SK-N-SH (cell line): ENCODE measurements at regions of chr12 and their contacts with region 1.

Region 1: GRCh38 chr12:15846887-15847286 is 35.3 kb upstream of the STRAP start:
- DNase-seq: no peak
- H3K4me3 ChIP-seq: no peak overlapping the region
- H3K27ac ChIP-seq: peak overlapping the region in 1 of 2 experiments; percentile 46; a peak in 1 of 4 replicates
- H3K4me1 ChIP-seq: peaks cover 0 to 8% of the 10 kb centered on the region in 2 experiments; a peak in 1 of 4 replicates
- H3K27me3 ChIP-seq: no peaks in the 10 kb centered on the region
- CTCF ChIP-seq: no peak
- EP300 ChIP-seq: no peak
- RAD21 ChIP-seq: no peak

Region 2: GRCh38 chr12:15590180-15590826 is 256.6 kb before region 1 on chr12:
- CTCF ChIA-PET with region 1: interaction called, 21 read pairs
- POLR2A ChIA-PET with region 1: no interaction called
- DNase-seq: peak; percentile 67
- H3K4me3 ChIP-seq: peak overlapping the region in 1 of 2 experiments; percentile 25; a peak in 1 of 4 replicates
- H3K27ac ChIP-seq: peak overlapping the region in 1 of 2 experiments; percentile 12; a peak in 1 of 4 replicates
- H3K4me1 ChIP-seq: no peaks in the 10 kb centered on the region; a peak in 2 of 4 replicates
- H3K27me3 ChIP-seq: no peaks in the 10 kb centered on the region
- CTCF ChIP-seq: peak; percentile 92
- EP300 ChIP-seq: no peak
- RAD21 ChIP-seq: peak; percentile 91

Region 3: GRCh38 chr12:15899282-15899870 is 52.5 kb after region 1 on chr12:
- CTCF ChIA-PET with region 1: no interaction called
- POLR2A ChIA-PET with region 1: no interaction called
- DNase-seq: no peak
- H3K4me3 ChIP-seq: no peak overlapping the region
- H3K27ac ChIP-seq: peak overlapping the region in 1 of 2 experiments; percentile 5; a peak in 1 of 4 replicates
- H3K4me1 ChIP-seq: peaks cover 0 to 9% of the 10 kb centered on the region in 2 experiments; a peak in 2 of 4 replicates
- H3K27me3 ChIP-seq: no peaks in the 10 kb centered on the region
- CTCF ChIP-seq: peak; percentile 89
- EP300 ChIP-seq: no peak
- RAD21 ChIP-seq: peak; percentile 61

Region 4: DNA sequence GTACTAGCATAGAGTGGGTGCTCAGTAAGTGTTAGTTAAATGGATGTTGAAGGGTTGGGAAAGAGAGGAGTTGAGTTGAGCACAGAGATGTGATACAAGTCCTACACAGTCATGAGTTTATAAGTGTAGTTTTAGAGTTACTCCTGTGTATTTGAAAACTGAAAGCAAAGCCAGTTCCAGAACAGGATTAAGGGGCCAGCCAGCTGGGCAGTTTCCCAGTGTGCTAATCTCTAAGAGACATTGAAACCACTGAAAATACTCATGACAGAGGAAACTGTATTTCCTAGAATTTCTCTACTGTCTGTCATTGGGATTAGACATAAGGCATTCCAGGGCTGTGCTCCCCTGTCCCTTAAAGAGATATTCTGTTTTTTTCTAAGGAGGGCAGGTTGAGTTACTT is 165.2 kb after region 1 on chr12:
- CTCF ChIA-PET with region 1: no interaction called
- POLR2A ChIA-PET with region 1: no interaction called
- DNase-seq: no peak
- H3K4me3 ChIP-seq: no peak overlapping the region
- H3K27ac ChIP-seq: no peak overlapping the region
- H3K4me1 ChIP-seq: no peaks in the 10 kb centered on the region; a peak in 1 of 4 replicates
- H3K27me3 ChIP-seq: no peaks in the 10 kb centered on the region
- CTCF ChIP-seq: no peak
- EP300 ChIP-seq: no peak
- RAD21 ChIP-seq: no peak